ENCODE measurements at regions of chr14 and their contacts with region 1.

Region 1: DNA sequence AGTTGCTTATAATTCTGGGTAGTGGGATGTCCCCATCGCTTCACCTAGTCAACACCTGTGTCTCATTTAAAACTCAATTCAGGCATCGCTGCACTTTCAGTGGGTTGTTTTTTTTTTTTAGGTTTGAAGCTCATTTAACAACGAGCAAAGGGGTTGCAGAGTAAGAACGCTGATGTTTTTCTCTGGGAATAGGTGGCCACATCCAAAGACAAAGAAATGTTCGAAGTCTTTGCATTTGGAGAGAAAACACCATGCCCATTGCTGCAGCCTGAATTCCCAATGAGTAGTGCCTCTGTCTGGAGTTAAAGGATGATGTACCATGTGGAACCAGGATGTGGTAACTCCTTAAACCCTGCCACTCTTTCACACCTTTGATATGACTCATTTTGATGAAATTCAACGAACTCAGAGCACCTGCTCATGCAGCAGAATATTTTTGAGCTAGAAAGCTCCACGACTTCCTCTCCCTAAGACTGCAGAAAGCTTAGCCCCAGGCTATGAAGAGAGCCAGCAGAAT is 35.1 kb upstream of the BATF start:
- DNase-seq: no peak
- H3K4me3 ChIP-seq: no peak overlapping the region
- CTCF ChIP-seq: no peak

Region 2: DNA sequence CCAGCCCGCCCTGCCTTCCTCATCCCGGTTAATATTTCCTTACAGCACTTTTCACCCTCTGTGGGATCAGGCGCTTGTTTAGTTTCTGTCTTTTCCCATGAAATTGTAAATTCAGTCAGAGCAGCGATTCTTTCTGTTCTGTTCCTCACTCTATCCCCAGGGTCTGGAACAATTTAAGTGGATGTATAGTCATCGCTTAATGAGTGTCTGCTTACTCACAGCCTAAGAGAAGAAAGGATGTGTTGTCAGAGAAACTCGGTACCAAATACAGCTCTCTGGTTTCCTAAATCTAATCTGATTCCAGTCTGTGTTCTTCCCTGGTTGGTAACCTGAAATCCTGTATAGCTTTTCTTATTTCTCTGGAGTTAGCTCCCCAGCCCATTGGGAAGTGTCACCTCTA is 163.6 kb before region 1 on chr14:
- CTCF ChIA-PET with region 1: interaction called, 18 read pairs
- POLR2A ChIA-PET with region 1: no interaction called
- DNase-seq: no peak
- H3K4me3 ChIP-seq: no peak overlapping the region
- CTCF ChIP-seq: no peak

Region 3: DNA sequence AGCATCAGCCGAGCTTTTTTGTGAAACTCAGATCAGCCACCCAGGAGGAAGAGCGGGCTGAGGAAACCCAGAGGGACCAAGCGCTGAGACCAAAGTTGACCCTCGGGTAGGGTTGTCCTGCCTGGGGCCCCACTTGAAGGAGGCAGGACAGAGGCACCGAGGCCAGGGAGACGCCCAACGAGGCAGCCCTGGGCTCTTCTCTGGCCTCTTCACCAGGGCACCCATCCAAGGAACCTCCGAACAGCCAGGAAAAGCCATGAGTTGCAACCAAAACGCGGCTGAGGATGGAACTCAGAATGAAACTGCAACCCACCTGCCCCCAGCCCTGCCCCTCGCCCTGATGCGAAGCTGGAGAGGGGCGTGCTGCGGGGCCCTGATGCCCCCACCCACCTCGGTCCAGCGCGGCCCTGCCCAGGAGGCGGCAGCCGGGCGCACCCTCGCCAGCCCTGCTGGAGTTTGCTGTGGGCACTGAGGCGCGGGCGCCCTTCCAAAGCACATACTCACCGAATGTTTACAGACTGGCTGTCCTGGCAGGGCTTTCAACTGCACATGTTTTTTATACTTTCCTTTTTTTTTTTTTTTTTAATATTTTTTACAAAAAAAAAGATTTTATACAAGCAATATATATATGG is 17.5 kb before region 1 on chr14:
- CTCF ChIA-PET with region 1: interaction called, 95 read pairs
- POLR2A ChIA-PET with region 1: no interaction called
- DNase-seq: no peak
- H3K4me3 ChIP-seq: no peak overlapping the region
- CTCF ChIP-seq: no peak

Region 4: DNA sequence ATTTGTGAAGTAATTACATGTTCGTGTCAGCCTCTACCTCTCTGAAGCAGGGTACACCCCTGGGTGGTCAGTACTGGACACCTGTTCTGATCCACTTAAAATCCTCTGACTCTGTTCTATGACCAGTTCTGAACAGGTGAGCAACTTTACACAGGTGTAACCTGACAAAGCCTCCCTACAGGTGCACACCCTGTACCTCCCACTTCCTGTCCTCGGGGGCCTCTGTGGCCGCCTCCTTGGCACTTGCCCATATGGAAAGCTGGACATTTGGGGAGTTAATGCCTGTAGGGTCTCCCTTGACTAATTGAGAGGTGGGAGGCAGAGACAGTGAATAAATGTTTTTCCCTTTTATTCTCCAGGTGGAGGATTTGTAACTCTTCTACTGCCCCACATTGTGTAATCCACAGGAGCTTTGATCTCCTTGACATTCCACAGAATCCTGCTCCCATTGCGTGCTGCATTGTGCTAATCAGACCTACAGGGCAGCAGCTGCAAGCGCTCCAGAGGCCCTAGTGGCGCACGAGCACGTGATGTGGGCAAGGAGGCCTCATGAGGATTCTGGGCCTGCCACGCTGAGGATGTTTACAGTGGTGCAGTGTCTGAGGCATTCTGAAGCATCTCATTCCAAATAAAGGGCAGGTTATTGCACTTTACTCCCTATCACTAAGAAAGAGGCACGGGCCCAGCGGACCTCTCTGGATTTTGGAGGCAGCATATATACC is 10.8 kb before region 1 on chr14:
- CTCF ChIA-PET with region 1: interaction called, 95 read pairs
- POLR2A ChIA-PET with region 1: no interaction called
- DNase-seq: no peak
- H3K4me3 ChIP-seq: no peak overlapping the region
- CTCF ChIP-seq: no peak

Region 5: DNA sequence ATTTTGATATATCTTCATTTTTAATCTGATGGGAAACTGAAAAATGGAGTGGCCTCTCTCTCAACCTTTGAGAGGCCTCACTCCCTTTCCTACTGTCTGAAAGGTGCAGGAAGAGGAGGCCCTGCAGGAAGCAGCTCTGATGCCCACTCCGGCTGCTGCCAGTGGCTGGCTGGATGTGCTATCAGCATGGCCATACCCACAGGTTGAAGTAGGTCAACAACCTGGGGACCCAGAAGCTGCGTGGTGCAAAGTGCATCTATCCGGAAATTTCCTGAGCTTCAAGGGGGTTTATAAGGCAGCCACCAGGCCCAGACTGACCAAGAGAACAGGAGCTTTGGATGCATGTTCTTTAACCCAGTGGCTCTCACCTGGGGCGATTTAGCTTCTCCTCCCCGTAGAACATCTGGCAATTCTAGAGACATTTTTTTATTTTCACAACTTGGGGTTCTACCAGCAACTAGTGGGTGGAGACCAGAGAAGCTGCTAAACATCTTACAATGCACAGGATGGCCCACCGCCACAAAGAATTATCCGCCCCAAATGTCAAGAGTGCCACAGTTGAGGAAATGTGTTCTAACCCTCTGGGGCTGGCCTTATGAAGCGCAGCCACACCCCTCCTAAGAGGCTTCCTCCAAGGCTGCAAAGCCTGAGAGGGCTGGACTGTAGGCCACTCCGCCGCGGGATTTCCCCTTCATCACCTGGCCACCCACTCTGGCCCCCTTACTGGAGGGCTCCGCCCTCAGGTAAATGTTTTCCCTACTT is 26.9 kb after region 1 on chr14:
- CTCF ChIA-PET with region 1: interaction called, 12 read pairs
- POLR2A ChIA-PET with region 1: no interaction called
- DNase-seq: no peak
- H3K4me3 ChIP-seq: no peak overlapping the region
- CTCF ChIP-seq: no peak

Region 6: DNA sequence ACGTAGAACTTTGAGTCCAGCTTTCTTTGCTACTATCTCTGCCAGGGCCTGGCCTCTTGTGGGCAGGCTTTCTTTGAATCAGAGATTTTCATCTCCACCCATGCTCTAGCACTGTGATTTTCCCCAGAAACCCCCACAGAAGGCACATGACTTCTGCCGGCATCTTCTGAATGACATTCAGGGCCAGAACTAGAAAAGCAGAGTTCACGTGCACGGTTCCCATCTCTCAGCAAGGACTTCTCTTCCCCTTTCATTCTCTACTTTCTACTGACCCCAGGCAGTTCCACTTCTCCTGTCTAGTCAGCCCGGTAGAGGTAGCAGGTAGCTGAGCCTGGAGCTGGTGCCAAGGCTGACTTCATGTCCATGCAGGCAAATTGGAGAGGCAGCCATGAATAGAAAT is 62.0 kb after region 1 on chr14:
- CTCF ChIA-PET with region 1: no interaction called
- POLR2A ChIA-PET with region 1: no interaction called
- DNase-seq: no peak
- H3K4me3 ChIP-seq: no peak overlapping the region
- CTCF ChIP-seq: no peak

Region 7: GRCh38 chr14:75560962-75561432 is 73.8 kb after region 1 on chr14:
- CTCF ChIA-PET with region 1: interaction called, 20 read pairs
- POLR2A ChIA-PET with region 1: no interaction called
- DNase-seq: no peak
- H3K4me3 ChIP-seq: no peak overlapping the region
- CTCF ChIP-seq: peak; percentile 86

Region 8: GRCh38 chr14:75752907-75753594 is 265.8 kb after region 1 on chr14:
- CTCF ChIA-PET with region 1: no interaction called
- POLR2A ChIA-PET with region 1: no interaction called
- DNase-seq: no peak
- H3K4me3 ChIP-seq: no peak overlapping the region
- CTCF ChIP-seq: no peak